AG04449 (cell line): ENCODE measurements at regions of chr11 and their contacts with region 1.

Region 1: GRCh38 chr11:69000831-69001242 is 12.2 kb downstream of the MRGPRF start:
- DNase-seq: peak; percentile 38
- H3K4me3 ChIP-seq: no peak overlapping the region
- CTCF ChIP-seq: peak; percentile 59

Region 2: DNA sequence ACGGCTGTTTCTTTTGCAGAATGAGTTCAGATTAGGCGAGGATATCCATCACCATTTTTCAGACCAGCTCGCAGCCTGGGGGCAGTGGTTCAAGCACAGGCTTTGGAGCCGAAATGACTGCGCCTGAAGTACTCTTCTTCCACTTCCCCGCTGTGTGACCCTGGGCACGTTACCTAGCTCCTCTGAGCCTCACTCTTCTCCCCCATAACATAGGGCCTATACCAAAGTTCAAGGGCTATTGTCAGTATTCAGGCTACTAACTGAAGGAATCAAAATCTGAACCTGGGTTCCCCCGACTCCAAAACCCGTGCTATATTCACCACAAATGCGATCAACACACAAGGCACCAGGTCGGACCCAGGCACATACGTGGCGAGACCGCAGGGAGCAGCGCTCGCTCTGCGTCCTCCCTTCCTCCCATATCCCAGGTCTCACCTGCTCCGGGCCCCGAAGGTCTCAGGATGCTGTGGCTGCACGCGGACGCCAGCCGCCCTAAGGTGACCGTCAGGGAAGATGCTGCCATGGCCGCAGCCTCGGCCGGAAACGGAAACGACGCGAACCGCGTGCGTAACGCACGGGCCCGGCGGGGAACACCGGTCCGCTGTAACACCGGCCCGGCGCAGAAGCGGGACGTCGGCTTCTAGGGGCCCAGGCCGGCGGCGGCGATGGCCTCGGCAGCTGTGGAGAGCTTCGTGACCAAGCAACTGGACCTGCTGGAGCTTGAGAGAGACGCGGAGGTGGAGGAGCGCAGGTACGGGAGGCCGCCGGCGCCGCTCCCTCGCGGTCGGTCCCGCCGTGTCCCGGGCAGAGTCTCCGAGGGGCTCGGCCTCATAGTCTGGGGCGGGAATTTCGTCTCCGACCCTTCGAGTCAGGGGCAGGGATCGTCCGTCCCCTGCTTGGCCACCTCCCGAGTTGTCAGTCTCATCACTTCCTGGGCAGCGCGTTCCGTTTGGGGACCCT is 97.3 kb before region 1 on chr11 and contains the starts of genes IGHMBP2 and MRPL21:
- CTCF ChIA-PET with region 1: no interaction called
- POLR2A ChIA-PET with region 1: no interaction called
- DNase-seq: no peak
- H3K4me3 ChIP-seq: peak within 1 kb of the TSS; percentile 100
- CTCF ChIP-seq: no peak

Region 3: GRCh38 chr11:68970921-68971636 is 29.8 kb before region 1 on chr11:
- CTCF ChIA-PET with region 1: no interaction called
- POLR2A ChIA-PET with region 1: no interaction called
- DNase-seq: no peak
- H3K4me3 ChIP-seq: no peak overlapping the region
- CTCF ChIP-seq: no peak

Region 4: DNA sequence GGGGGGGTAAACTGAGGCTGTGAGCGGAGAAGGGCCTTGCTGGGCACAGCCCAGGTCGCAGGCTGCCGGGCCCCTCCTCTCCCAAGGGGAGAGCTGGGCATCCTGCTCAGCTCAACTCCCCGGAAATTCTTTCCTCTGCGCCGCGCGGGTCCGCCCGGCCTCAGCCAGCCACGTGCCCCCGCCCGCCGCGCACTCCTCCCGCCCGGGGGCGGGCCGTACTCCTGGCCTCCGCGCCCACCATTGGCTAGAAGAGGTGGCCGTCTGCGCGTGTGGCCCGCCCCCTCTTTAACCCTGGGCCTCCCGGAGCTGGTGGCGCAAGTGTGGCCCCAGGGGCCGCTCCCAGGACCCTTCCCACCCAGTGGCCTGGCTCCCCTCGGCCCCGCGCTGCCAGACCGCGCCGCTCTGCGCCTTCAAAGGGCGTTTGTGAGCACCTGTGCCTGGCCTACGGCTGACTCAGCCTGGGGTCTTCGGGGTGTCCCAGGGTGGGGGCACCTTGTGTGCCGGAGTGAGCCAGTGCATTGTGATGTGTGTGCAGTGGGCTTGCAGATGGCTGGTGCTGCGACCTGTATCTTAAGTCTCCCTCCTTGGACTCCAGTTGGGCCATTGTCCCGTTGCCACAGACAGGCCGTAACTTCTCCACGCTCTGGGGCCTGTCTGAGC is 10.3 kb after region 1 on chr11:
- CTCF ChIA-PET with region 1: interaction called, 37 read pairs
- POLR2A ChIA-PET with region 1: interaction called, 10 read pairs
- DNase-seq: no peak
- H3K4me3 ChIP-seq: peak overlapping the region; percentile 70
- CTCF ChIP-seq: no peak